ENCODE measurements at regions of chr1 and their contacts with region 1.

Region 1: GRCh38 chr1:76154206-76154956 is 79.8 kb downstream of the ST6GALNAC3 start:
- DNase-seq: peak; percentile 79
- H3K4me3 ChIP-seq: peak overlapping the region in 3 of 4 donors; percentile 10 to 43 (median 16)
- H3K27ac ChIP-seq: peak overlapping the region; percentile 14 to 61 (median 50)
- H3K4me1 ChIP-seq: peaks cover 0 to 11% (median 2%) of the 10 kb centered on the region in 4 donors
- H3K27me3 ChIP-seq: no peaks in the 10 kb centered on the region
- CTCF ChIP-seq: peak; percentile 90 to 97 (median 95)
- EP300 ChIP-seq: no peak
- POLR2A ChIP-seq: no peak

Region 2: GRCh38 chr1:76105372-76105771 is 49.0 kb before region 1 on chr1:
- in situ Hi-C with region 1: no loop called
- intact Hi-C with region 1: no loop called
- DNase-seq: no peak
- H3K4me3 ChIP-seq: no peak overlapping the region
- H3K27ac ChIP-seq: no peak overlapping the region
- H3K4me1 ChIP-seq: no peaks in the 10 kb centered on the region
- H3K27me3 ChIP-seq: no peaks in the 10 kb centered on the region
- CTCF ChIP-seq: no peak
- EP300 ChIP-seq: no peak
- POLR2A ChIP-seq: no peak

Region 3: DNA sequence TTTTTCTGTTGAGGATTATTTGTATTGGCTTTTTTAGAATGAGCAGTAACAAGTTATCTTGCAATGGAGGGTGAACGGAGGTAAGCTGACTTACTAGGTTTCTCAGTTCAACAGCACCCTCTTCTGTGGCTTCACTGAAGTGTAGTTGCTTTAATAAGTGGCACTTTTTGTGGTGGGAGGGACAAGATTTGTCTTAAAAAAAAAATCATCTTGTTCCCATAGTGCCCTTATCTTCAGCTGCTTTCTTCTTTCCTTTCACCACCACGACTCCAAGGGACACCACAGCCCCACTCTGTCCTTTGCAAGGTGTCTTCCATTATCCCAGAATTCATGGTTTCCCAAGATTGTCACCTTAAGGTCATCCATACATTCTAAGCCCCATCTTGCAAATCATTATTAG is 971.9 kb after region 1 on chr1:
- in situ Hi-C with region 1: loop called (anchors 25 kb)
- intact Hi-C with region 1: loop called (anchors 10 kb)
- DNase-seq: no peak
- H3K4me3 ChIP-seq: no peak overlapping the region
- H3K27ac ChIP-seq: no peak overlapping the region
- H3K4me1 ChIP-seq: peaks cover 0 to 6% (median 0%) of the 10 kb centered on the region in 4 donors
- H3K27me3 ChIP-seq: no peaks in the 10 kb centered on the region
- CTCF ChIP-seq: peak; percentile 18 to 46 (median 37)
- EP300 ChIP-seq: no peak
- POLR2A ChIP-seq: no peak

Measured in transverse colon (tissue), 4 donors.